BJ (cell line): ENCODE measurements at regions of chr16 and their contacts with region 1.

Region 1: GRCh38 chr16:77675464-77676324 is 46.6 kb upstream of the NUDT7 start:
- DNase-seq: peak; percentile 7
- H3K4me3 ChIP-seq: no peak overlapping the region
- H3K27me3 ChIP-seq: no peaks in the 10 kb centered on the region
- CTCF ChIP-seq: peak; percentile 86

Region 2: DNA sequence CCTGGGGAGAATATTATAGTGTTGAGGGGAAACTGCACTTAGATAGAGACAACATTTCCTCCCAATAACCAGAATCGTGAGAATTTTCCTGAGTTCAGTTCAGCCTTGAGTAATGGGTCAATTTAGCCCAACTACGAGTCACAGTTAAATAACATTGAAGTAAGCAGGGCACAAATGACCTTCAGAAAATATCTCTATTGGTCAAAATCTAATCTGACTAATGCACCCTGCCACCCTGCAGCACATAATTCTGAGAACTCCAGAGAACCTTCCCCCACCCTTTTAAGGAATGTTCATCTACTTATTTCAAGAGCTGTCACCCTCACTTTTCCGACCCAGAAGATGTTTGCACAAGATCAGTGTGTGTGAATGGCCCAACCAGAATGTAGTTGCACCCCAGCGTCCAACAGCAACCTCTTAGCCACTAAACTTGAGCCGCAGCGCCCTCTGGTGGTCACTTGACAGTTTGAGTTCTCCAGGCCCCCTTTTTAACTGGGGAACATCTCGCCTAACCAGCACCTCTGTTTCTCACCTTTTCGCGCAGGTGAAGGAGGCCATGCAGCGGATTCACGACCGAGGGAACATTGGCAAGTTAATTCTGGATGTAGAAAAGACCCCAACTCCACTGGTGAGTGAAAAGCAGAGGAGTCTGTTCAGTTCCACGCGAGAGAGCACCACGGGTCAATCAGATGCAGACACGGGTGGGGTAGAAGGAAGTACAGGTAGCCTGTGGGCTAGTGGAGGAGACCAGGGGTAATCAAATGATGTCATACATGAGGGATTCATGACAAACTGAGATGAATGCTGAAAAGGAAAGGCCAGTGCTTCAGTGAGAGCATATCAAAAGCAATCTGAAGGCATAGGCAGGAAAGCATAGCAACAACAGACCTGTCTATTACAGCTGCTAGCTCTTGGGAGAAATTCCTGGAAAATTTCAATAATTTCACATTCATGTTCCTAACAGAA is 295.9 kb after region 1 on chr16:
- CTCF ChIA-PET with region 1: interaction called, 54 read pairs
- POLR2A ChIA-PET with region 1: no interaction called
- DNase-seq: no peak
- H3K4me3 ChIP-seq: no peak overlapping the region
- H3K27me3 ChIP-seq: no peaks in the 10 kb centered on the region
- CTCF ChIP-seq: peak; percentile 57

Region 3: DNA sequence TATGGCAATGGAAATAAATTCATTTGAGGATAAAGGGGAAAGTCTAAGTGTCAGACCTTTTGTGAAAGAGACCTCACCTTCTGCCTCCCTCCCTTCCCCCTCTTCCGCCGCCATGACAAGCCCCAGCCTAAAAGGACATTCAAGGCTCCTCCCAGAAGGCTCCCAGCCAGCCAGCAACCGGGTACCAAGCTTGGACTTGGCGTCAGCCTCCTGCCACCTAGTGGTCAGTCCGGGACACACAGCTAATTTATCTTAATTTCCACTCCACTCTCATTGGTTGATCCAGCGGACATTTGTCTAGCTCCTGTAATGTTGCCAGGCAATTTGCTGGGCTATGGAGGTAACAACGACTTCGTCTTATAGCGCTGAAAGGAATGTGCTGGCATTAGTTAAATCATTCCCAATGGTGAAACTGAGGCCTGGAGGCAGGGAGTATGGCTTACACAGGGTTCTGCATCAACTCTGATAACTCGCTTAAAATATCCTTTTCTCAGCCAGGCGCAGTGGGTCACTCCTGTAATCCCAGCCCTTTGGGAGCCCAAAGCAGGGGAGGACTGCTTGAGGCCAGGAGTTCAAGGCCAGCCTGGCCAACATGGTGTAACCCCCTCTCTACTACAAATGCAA is 327.3 kb after region 1 on chr16:
- CTCF ChIA-PET with region 1: interaction called, 11 read pairs
- POLR2A ChIA-PET with region 1: no interaction called
- DNase-seq: peak; percentile 12
- H3K4me3 ChIP-seq: no peak overlapping the region
- H3K27me3 ChIP-seq: no peaks in the 10 kb centered on the region
- CTCF ChIP-seq: peak; percentile 70